K562 (cell line): ENCODE measurements at regions of chr1 and their contacts with region 1.

Region 1: DNA sequence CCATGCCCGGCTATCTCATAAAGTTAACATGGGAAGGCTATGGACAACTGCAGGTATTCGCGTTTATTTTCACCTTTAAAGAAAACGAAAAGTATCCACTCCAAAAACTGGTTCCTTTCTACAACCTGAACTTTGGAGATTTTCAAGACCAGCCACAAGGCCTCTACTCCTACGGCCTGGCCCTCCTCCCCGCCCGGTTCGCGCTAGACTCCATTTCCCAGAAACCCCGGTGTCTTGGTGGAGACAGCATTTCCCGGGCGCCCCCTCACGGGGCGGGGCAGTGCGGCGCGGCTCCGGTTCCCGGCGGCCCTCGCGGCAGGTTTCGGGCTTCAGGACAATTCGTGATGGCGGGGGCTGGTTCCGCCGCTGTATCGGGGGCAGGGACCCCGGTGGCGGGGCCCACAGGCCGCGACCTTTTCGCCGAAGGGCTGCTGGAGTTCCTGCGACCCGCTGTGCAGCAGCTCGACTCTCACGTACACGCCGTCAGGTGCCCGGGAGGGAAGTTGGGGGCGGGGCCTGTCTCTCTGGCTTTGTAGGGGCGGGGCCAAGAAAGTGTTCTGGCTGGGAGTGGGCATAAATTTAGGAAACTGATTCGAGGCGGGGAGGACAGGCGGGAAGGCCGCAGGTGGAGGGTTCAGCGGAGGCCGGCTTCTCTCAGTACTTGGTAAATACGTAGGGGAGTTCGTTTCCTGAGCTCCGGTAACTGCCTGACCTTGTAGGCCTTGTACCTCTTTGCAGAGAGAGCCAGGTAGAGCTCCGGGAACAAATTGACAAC is at the start of gene SNAPIN:
- DNase-seq: peak; percentile 87 to 95 (median 90)
- ATAC-seq: peak; percentile 97
- H3K4me3 ChIP-seq: peak within 1 kb of the TSS; percentile 98
- H3K27ac ChIP-seq: peak within 1 kb of the TSS; percentile 86
- H3K4me1 ChIP-seq: peaks cover 3 to 16% of the 10 kb centered on the region in 2 experiments; a peak in 4 of 5 replicates
- H3K27me3 ChIP-seq: no peaks in the 10 kb centered on the region
- CTCF ChIP-seq: 0 out of 6 replicates have a peak, but pooled peaks of 2 of the 3 experiments have one; percentile 14 to 25
- EP300 ChIP-seq: no peak
- POLR2A ChIP-seq: peak; percentile 87
- RAD21 ChIP-seq: 0 out of 4 replicates have a peak, but pooled peaks of 1 of the 2 experiments have one; percentile 6
- polyA plus RNA-seq, gene SNAPIN: 11.2 to 15.8 TPM

Region 2: DNA sequence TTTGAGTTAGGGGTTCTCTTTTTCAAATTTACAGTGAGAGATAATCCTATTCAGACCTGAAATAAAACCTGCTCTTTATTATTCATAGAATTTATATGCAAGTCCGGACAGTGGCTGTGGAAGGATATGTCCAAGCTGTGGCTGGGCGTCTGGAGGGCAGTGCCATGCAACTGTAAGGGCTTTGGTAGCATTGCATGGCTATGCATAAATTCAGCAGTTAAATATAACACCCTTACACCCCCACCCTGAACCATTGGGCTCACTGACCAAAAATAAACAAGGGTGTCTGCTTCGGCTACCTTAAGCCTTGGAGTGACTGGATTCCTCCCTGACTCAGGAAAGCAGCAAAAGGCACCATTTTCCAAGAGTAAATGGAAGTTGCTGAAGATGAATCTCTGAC is 19.3 kb before region 1 on chr1:
- CTCF ChIA-PET with region 1: no interaction called
- POLR2A ChIA-PET with region 1: interaction called, 205 read pairs
- in situ Hi-C with region 1: no loop called
- intact Hi-C with region 1: no loop called
- DNase-seq: no peak
- ATAC-seq: no peak
- H3K4me3 ChIP-seq: no peak overlapping the region
- H3K27ac ChIP-seq: no peak overlapping the region
- H3K4me1 ChIP-seq: peaks cover 3 to 8% of the 10 kb centered on the region in 2 experiments; a peak in 4 of 5 replicates
- H3K27me3 ChIP-seq: no peaks in the 10 kb centered on the region
- CTCF ChIP-seq: no peak
- EP300 ChIP-seq: no peak
- POLR2A ChIP-seq: 0 out of 2 replicates have a peak, but pooled peaks have one; percentile 0
- RAD21 ChIP-seq: no peak

Region 3: DNA sequence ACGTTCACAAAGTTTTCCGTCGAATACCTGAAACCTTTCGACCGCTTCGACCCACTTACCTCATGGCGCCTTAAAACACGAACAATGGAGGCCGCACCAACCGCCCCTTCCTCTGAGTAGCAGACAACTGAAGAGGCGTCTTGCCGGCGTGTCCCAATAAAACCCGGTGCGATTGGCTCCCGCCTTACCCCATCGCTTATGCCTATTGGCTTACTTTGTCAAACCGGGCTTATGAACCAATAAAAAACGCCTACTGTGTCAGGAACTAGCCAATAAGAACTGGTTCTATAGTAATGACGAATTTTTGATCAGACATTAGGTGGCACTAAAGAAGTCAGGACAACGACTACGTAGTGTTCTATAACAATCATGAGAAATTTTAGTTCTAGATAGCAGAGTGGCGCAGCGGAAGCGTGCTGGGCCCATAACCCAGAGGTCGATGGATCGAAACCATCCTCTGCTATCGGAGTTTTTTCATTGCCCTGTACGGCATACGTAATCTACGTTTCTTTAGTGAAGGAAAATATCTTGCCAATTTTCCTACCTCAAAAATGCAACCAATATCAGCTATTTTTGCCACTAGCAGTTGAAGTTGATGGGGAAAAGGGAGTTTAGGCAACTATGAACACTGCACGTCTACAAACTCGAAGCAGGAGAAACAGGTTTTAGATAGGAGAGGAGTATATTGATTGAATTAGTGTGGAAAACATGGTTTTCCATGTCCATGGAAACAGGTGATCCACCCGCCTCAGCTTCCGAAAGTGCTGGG is 12.5 kb after region 1 on chr1 and contains the start of gene ILF2:
- CTCF ChIA-PET with region 1: no interaction called
- POLR2A ChIA-PET with region 1: interaction called, 26 read pairs
- in situ Hi-C with region 1: no loop called
- intact Hi-C with region 1: no loop called
- DNase-seq: peak; percentile 97 to 100 (median 98)
- ATAC-seq: peak; percentile 95
- H3K4me3 ChIP-seq: peak within 1 kb of the TSS; percentile 94
- H3K27ac ChIP-seq: peak within 1 kb of the TSS; percentile 92
- H3K4me1 ChIP-seq: peaks cover 0 to 4% of the 10 kb centered on the region in 2 experiments; a peak in 3 of 5 replicates
- H3K27me3 ChIP-seq: no peaks in the 10 kb centered on the region
- CTCF ChIP-seq: peak in 2 of 3 experiments; percentile 61 to 63; a peak in 4 of 6 replicates
- EP300 ChIP-seq: peak; percentile 66; the same call in 1 of the 2 replicates
- POLR2A ChIP-seq: peak; percentile 97
- RAD21 ChIP-seq: no peak; a peak in 1 of 4 replicates
- polyA plus RNA-seq, gene ILF2: 459 to 642 TPM

Region 4: DNA sequence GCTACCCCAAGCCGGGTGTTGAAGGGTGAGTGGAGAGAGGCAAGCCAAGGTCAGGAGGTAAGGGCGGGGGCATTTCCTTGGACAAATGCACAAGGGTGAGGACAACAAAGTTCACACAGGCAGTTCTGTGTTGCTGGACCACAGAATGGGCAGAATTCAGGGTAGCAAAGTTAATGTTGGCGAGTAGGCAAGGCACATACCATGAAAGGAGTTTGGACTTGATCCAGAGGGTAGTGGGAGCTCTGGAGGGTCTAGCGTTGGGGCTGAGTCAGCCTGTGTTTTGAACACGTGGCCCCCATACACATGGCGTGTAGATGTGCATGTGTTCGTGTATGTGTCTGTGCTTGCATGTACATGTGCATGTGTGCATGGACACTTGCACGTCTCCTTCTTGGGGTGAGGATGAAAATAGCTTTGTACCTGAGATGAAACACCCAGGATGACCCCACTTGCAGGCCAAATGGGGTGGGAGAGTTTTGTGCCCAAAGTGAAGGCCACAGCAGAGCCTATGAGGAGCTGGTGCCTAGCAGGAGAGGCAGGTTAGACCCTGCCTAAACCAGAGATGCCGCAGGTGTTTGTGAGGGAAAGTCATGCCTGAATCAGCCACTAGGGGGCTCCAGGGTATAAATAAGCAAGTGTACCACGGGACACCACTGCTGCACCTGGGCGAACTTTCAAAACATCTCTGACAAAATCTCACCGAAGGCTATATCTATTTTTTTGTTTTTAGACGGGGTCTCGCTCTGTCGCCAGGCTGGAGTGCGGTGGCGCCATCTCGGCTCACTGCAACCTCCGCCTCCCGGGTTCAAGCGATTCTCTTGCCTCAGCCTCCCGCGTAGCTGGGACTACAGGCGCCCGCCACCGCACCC is 138.4 kb after region 1 on chr1:
- CTCF ChIA-PET with region 1: no interaction called
- POLR2A ChIA-PET with region 1: no interaction called
- in situ Hi-C with region 1: no loop called
- intact Hi-C with region 1: no loop called
- DNase-seq: peak; percentile 83 to 87 (median 86)
- ATAC-seq: peak; percentile 89
- H3K4me3 ChIP-seq: no peak overlapping the region
- H3K27ac ChIP-seq: no peak overlapping the region
- H3K4me1 ChIP-seq: peaks cover 0 to 42% of the 10 kb centered on the region in 2 experiments; a peak in 2 of 5 replicates
- H3K27me3 ChIP-seq: no peaks in the 10 kb centered on the region
- CTCF ChIP-seq: peak; percentile 88 to 91 (median 89)
- EP300 ChIP-seq: no peak
- POLR2A ChIP-seq: no peak
- RAD21 ChIP-seq: peak; percentile 66 to 86

Region 5: DNA sequence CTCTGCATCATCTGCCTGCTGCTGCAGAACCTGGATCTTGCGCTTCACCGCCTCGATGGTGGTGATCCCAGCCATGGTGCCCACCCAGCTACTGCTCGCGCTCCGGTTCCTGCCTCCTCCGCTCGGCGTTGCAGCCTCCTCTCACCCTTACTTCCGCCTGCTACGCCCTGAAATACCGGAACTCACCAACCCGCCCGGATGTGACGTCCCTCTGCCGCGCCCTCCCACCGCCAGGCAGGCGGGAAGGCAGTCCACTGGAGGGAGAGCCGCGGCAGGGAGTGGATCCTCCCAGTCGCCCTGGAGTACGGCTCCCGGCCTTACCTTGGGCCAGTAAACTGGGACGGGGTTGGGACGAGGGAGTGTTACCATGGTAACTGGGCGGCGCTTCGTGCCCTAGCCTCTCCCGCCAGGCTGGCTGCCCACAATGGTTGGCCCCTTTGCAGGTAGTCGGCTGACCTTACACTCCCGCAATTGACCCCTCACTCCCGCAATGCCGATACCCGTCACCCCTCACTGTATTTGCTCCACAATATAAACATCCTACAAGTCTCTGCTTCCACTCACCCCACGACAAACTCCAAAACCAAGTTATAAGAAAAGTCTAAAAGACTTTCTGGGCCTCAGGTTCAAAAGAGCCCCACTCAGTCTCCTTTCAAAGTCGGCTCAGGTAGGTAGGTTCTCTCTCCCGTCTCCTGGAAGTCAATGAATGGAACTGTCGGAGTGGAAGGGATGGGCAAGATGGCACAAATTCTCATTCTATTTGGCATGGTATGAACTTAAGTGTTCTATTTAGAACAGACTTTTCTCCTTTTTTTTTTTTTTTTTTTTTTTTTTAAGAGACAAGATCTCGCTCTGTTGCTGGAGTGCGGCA is 524.7 kb after region 1 on chr1:
- CTCF ChIA-PET with region 1: no interaction called
- POLR2A ChIA-PET with region 1: no interaction called
- in situ Hi-C with region 1: no loop called
- intact Hi-C with region 1: no loop called
- DNase-seq: peak; percentile 96 to 98 (median 96)
- ATAC-seq: peak; percentile 89
- H3K4me3 ChIP-seq: peak overlapping the region; percentile 71
- H3K27ac ChIP-seq: peak overlapping the region; percentile 90
- H3K4me1 ChIP-seq: peaks cover 26 to 53% of the 10 kb centered on the region in 2 experiments
- H3K27me3 ChIP-seq: no peaks in the 10 kb centered on the region
- CTCF ChIP-seq: 0 out of 6 replicates have a peak, but pooled peaks of 1 of the 3 experiments have one; percentile 0
- EP300 ChIP-seq: no peak
- POLR2A ChIP-seq: peak; percentile 98
- RAD21 ChIP-seq: no peak; a peak in 1 of 4 replicates